Activated CD4-positive, alpha-beta memory T cell treated with anti-CD3 and anti-CD28 coated beads for 36 hours (primary cell): ENCODE measurements at regions of chr5 and their contacts with region 1.

Region 1: GRCh38 chr5:150846654-150847333 is 473 bp downstream of the IRGM start:
- DNase-seq: peak; percentile 76
- H3K4me3 Mint-ChIP-seq: peak overlapping the region; percentile 73
- H3K27ac Mint-ChIP-seq: peak overlapping the region; percentile 52
- H3K4me1 Mint-ChIP-seq: peaks cover 20% of the 10 kb centered on the region
- H3K27me3 Mint-ChIP-seq: no peaks in the 10 kb centered on the region

Region 2: GRCh38 chr5:150560401-150561193 is 286.2 kb before region 1 on chr5:
- CTCF ChIA-PET with region 1: interaction called, 85 read pairs
- POLR2A ChIA-PET with region 1: interaction called, 4 read pairs
- intact Hi-C with region 1: loop called (anchors 1 kb)
- DNase-seq: peak; percentile 85
- H3K4me3 Mint-ChIP-seq: no peak overlapping the region
- H3K27ac Mint-ChIP-seq: no peak overlapping the region
- H3K4me1 Mint-ChIP-seq: no peaks in the 10 kb centered on the region
- H3K27me3 Mint-ChIP-seq: no peaks in the 10 kb centered on the region

Region 3: DNA sequence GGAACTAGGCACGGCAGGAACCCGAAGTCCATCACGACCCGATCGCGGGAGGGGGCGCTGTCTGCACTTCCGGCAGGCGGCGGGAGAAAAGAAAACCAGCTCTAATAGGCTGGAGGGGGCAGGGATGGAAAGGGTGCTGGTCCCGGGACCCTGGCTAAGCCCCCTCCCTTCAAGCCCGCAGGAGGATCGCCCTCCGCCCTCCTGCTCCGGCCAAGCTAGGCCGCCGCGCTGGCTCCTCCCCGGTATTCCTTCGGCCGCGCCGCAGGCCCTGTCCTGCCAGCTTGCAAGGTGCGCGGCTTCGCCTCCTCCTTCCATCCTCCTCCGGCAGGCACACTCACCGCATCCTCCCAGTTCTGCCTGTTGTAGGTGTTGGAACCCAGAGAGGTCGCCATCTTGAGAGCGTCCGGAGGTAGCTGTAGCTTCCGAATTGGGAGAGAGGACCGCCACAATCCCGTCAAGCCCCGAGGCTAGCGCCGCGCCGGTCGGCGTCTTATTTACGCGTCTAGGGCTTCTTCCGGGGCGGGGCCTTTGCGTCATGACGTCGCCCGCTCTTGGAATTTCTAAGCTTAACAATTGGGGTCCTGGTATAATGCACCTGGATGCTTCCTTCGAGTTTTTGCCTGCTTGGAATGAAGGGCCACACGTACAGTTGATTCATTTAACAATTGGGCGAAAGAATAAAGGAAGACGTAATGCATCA is 146.1 kb before region 1 on chr5 and contains the start of gene RBM22:
- CTCF ChIA-PET with region 1: interaction called, 33 read pairs
- POLR2A ChIA-PET with region 1: interaction called, 25 read pairs
- intact Hi-C with region 1: loop called (anchors 1 kb)
- DNase-seq: peak; percentile 95
- H3K4me3 Mint-ChIP-seq: no peak within 1 kb of the TSS
- H3K27ac Mint-ChIP-seq: no peak within 1 kb of the TSS
- H3K4me1 Mint-ChIP-seq: peaks cover 7% of the 10 kb centered on the region
- H3K27me3 Mint-ChIP-seq: no peaks in the 10 kb centered on the region
- total RNA-seq, gene RBM22: 59.6 to 66.4 TPM

Region 4: GRCh38 chr5:150758531-150759333 is 88.1 kb before region 1 on chr5 and contains the start of gene DCTN4:
- CTCF ChIA-PET with region 1: interaction called, 11 read pairs
- POLR2A ChIA-PET with region 1: interaction called, 4 read pairs
- intact Hi-C with region 1: no loop called
- DNase-seq: peak; percentile 96
- H3K4me3 Mint-ChIP-seq: no peak within 1 kb of the TSS
- H3K27ac Mint-ChIP-seq: no peak within 1 kb of the TSS
- H3K4me1 Mint-ChIP-seq: peaks cover 29% of the 10 kb centered on the region
- H3K27me3 Mint-ChIP-seq: peaks cover 2% of the 10 kb centered on the region
- total RNA-seq, gene DCTN4: 32.2 to 32.9 TPM

Region 5: GRCh38 chr5:150789943-150790611 is 56.7 kb before region 1 on chr5:
- CTCF ChIA-PET with region 1: interaction called, 19 read pairs
- POLR2A ChIA-PET with region 1: interaction called, 15 read pairs
- intact Hi-C with region 1: no loop called
- DNase-seq: peak; percentile 88
- H3K4me3 Mint-ChIP-seq: peak overlapping the region; percentile 53
- H3K27ac Mint-ChIP-seq: peak overlapping the region; percentile 93
- H3K4me1 Mint-ChIP-seq: peaks cover 60% of the 10 kb centered on the region
- H3K27me3 Mint-ChIP-seq: no peaks in the 10 kb centered on the region

Region 6: DNA sequence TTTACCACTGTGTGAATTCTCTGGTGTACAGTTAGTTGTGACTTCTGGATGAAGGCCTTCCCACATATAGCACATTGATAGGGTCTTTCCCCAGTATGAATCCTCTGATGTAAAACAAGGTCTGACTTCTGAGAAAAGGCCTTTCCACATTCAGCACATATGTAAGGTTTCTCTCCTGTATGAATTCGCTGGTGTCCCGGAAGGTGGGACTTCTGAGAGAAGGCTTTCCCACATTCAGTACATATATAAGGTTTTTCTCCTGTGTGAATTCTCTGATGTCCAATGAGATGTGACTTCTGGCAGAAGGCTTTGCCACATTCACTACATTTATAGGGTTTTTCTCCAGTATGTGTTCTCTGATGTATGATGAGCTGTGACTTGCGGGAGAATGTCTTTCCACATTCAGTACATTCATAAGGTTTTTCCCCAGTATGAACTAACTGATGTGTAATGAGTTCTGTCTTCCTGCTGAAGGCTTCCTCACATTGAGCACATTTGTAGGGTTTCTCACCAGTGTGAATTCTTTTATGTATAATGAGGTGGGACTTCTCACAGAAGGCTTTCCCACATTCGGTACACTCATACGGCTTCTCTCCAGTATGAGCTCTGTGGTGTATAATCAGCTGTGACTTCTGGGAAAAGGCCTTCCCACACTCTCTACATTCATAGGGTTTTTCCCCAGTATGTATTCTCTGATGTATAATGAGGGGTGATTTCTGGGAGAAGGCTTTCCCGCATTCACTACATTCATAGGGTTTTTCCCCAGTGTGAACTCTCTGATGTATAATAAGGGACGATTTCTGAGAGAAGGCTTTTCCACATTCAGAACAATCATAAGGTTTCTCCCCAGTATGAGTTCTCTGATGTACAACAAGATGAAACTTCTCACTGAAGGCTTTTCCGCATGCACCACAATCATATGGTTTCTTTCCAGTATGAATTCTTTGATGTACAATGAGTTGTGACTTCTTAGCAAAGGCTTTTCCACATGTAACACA is 48.9 kb after region 1 on chr5:
- CTCF ChIA-PET with region 1: no interaction called
- POLR2A ChIA-PET with region 1: no interaction called
- intact Hi-C with region 1: no loop called
- DNase-seq: no peak
- H3K4me3 Mint-ChIP-seq: no peak overlapping the region
- H3K27ac Mint-ChIP-seq: no peak overlapping the region
- H3K4me1 Mint-ChIP-seq: no peaks in the 10 kb centered on the region
- H3K27me3 Mint-ChIP-seq: no peaks in the 10 kb centered on the region

Region 7: GRCh38 chr5:151164686-151165392 is 318.0 kb after region 1 on chr5:
- CTCF ChIA-PET with region 1: interaction called, 6 read pairs
- POLR2A ChIA-PET with region 1: no interaction called
- intact Hi-C with region 1: loop called (anchors 2 kb)
- DNase-seq: peak; percentile 90
- H3K4me3 Mint-ChIP-seq: no peak overlapping the region
- H3K27ac Mint-ChIP-seq: no peak overlapping the region
- H3K4me1 Mint-ChIP-seq: peaks cover 18% of the 10 kb centered on the region
- H3K27me3 Mint-ChIP-seq: no peaks in the 10 kb centered on the region